SK-N-SH (cell line): ENCODE measurements at regions of chr19 and their contacts with region 1.

Region 1: GRCh38 chr19:3375221-3376090 is 9.1 kb downstream of the NFIC start:
- DNase-seq: peak; percentile 90
- H3K4me3 ChIP-seq: peak overlapping the region in 1 of 2 experiments; percentile 7; a peak in 1 of 4 replicates
- H3K27ac ChIP-seq: peak overlapping the region; percentile 44 to 94; a peak in 3 of 4 replicates
- H3K4me1 ChIP-seq: peaks cover 3 to 30% of the 10 kb centered on the region in 2 experiments; a peak in 3 of 4 replicates
- H3K27me3 ChIP-seq: no peaks in the 10 kb centered on the region
- CTCF ChIP-seq: no peak
- EP300 ChIP-seq: peak in 1 of 2 experiments; percentile 32; a peak in 2 of 4 replicates
- RAD21 ChIP-seq: no peak; the same call in 1 of the 2 replicates

Region 2: GRCh38 chr19:3346677-3347353 is 28.6 kb before region 1 on chr19:
- CTCF ChIA-PET with region 1: no interaction called
- POLR2A ChIA-PET with region 1: no interaction called
- DNase-seq: no peak
- H3K4me3 ChIP-seq: no peak overlapping the region
- H3K27ac ChIP-seq: no peak overlapping the region
- H3K4me1 ChIP-seq: peaks cover 0 to 3% of the 10 kb centered on the region in 2 experiments; a peak in 1 of 4 replicates
- H3K27me3 ChIP-seq: no peaks in the 10 kb centered on the region
- CTCF ChIP-seq: no peak
- EP300 ChIP-seq: no peak
- RAD21 ChIP-seq: no peak

Region 3: GRCh38 chr19:3387645-3388589 is 12.5 kb after region 1 on chr19:
- CTCF ChIA-PET with region 1: interaction called, 10 read pairs
- POLR2A ChIA-PET with region 1: interaction called, 21 read pairs
- DNase-seq: peak; percentile 98
- H3K4me3 ChIP-seq: no peak overlapping the region
- H3K27ac ChIP-seq: peak overlapping the region; percentile 66 to 96
- H3K4me1 ChIP-seq: peaks cover 28 to 50% of the 10 kb centered on the region in 2 experiments; a peak in 3 of 4 replicates
- H3K27me3 ChIP-seq: no peaks in the 10 kb centered on the region
- CTCF ChIP-seq: no peak
- EP300 ChIP-seq: peak; percentile 36 to 78; a peak in 1 of 4 replicates
- RAD21 ChIP-seq: peak; percentile 32